Activated naive CD4-positive, alpha-beta T cell treated with anti-CD3 and anti-CD28 coated beads for 36 hours (primary cell): ENCODE measurements at regions of chr3 and their contacts with region 1.

Region 1: GRCh38 chr3:42228806-42229205 is 37.2 kb downstream of the CCK start:
- DNase-seq: no peak
- H3K4me3 Mint-ChIP-seq: no peak overlapping the region
- H3K27ac Mint-ChIP-seq: no peak overlapping the region
- H3K4me1 Mint-ChIP-seq: no peaks in the 10 kb centered on the region
- H3K27me3 Mint-ChIP-seq: peaks cover 2% of the 10 kb centered on the region

Region 2: DNA sequence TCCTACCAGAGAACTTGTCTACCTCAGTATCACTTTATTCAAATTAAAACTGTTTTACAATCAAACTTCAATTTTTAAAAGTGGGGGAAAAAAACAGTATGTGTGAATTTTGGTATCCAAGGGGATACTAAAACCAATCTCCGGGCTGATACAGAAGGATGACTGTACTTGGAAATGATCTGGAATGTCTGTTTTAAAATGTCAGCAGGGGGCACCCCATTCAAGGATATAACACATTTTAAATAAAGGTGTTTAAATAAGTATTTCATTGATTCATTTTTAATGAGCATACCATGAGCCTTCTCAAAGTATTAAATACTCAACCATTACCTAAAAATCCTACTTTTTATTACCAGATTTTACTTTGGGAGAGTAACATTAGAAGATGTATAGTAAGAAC is 334.8 kb before region 1 on chr3:
- CTCF ChIA-PET with region 1: interaction called, 3 read pairs
- intact Hi-C with region 1: loop called (anchors 1 kb)
- DNase-seq: peak; percentile 23
- H3K4me3 Mint-ChIP-seq: no peak overlapping the region
- H3K27ac Mint-ChIP-seq: no peak overlapping the region
- H3K4me1 Mint-ChIP-seq: no peaks in the 10 kb centered on the region
- H3K27me3 Mint-ChIP-seq: no peaks in the 10 kb centered on the region

Region 3: GRCh38 chr3:42547401-42547945 is 318.7 kb after region 1 on chr3:
- CTCF ChIA-PET with region 1: no interaction called
- intact Hi-C with region 1: no loop called
- DNase-seq: peak; percentile 67
- H3K4me3 Mint-ChIP-seq: no peak overlapping the region
- H3K27ac Mint-ChIP-seq: no peak overlapping the region
- H3K4me1 Mint-ChIP-seq: peaks cover 3% of the 10 kb centered on the region
- H3K27me3 Mint-ChIP-seq: no peaks in the 10 kb centered on the region

Region 4: GRCh38 chr3:42906848-42907183 is 678.0 kb after region 1 on chr3:
- CTCF ChIA-PET with region 1: no interaction called
- intact Hi-C with region 1: no loop called
- DNase-seq: no peak
- H3K4me3 Mint-ChIP-seq: peak overlapping the region; percentile 41
- H3K27ac Mint-ChIP-seq: no peak overlapping the region
- H3K4me1 Mint-ChIP-seq: peaks cover 12% of the 10 kb centered on the region
- H3K27me3 Mint-ChIP-seq: peaks cover 13% of the 10 kb centered on the region